Dendritic cell treated with granulocyte-macrophage colony-stimulating factor and Interleukin-4, amounts not matched to agents 40 ng/mL and 50 ng/mL, for 4 days (primary cell): ENCODE measurements at regions of chr1 and their contacts with region 1.

Region 1: DNA sequence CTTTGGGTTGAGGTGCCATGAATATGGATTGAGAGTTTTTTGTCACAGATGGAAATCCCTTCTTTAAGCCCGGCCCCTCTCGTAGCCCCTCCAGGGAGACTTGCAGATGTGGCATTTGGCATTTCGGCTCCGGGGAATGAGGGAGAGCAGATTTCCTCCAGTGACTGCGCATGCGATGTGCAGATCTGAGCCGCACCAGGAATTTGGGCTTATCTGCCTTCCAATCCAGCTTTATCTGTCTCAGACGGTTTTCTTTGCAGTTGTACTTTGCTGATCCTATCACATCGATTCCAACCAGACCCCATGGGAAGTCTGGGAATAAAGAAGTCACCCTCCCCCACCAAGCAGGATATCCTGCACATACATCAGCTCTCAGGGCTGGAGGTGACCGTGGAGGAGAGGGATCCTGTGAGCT is 11.7 kb downstream of the KIF26B start:
- H3K4me3 Mint-ChIP-seq: no peak overlapping the region
- H3K27ac Mint-ChIP-seq: no peak overlapping the region
- H3K4me1 Mint-ChIP-seq: peaks cover 36% of the 10 kb centered on the region
- H3K27me3 Mint-ChIP-seq: peaks cover 45% of the 10 kb centered on the region

Region 2: GRCh38 chr1:245188403-245188802 is 21.9 kb after region 1 on chr1:
- intact Hi-C with region 1: loop called (anchors 1 kb)
- H3K4me3 Mint-ChIP-seq: peak overlapping the region; percentile 34
- H3K27ac Mint-ChIP-seq: peak overlapping the region; percentile 84
- H3K4me1 Mint-ChIP-seq: peaks cover 27% of the 10 kb centered on the region
- H3K27me3 Mint-ChIP-seq: peaks cover 13% of the 10 kb centered on the region

Region 3: DNA sequence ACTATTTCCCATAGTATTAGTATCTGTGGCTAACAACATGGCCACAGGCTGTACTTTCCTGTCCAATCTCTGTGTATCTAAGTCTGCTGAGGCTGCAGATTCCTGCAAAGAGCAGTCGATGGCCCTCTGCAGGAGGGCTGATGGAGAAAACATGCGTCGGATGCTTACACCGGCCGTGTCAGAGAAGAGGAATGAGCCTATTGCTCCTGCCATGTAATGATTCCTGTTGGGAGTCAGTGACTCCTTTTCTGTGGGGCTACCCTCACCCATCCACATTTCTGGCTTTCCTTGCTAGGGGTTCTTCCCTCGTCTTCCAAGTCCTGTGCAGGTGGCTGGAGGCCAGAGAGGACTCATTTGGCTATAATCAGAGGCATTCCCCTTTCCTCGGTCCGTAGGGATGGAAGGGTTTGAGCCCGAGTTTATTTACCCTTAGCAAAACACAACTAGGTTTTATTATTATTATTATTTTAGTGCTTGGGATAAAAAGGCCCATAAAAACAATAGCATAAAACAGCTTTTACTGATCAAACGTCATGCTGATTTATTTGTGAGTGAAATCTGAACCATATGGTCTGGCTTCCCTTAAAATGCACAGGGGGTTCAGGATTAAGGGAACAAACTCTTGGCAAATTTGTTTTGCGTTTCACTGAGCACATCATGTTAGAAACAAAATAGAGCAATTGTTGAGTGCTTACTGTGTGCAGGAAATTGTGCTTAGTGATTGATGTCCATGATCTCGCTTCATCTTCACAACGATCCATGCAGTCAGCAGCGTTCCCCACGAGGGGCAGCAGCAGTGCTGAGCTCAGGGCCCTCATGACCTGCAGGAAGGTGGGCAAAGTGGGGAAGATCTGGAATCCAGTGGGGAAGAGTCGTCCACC is 59.1 kb after region 1 on chr1:
- intact Hi-C with region 1: loop called (anchors 10 kb)
- H3K4me3 Mint-ChIP-seq: no peak overlapping the region
- H3K27ac Mint-ChIP-seq: no peak overlapping the region
- H3K4me1 Mint-ChIP-seq: no peaks in the 10 kb centered on the region
- H3K27me3 Mint-ChIP-seq: peaks cover 71% of the 10 kb centered on the region